Aorta (tissue), 5 donors: ENCODE measurements at regions of chr2 and their contacts with region 1.

Region 1: DNA sequence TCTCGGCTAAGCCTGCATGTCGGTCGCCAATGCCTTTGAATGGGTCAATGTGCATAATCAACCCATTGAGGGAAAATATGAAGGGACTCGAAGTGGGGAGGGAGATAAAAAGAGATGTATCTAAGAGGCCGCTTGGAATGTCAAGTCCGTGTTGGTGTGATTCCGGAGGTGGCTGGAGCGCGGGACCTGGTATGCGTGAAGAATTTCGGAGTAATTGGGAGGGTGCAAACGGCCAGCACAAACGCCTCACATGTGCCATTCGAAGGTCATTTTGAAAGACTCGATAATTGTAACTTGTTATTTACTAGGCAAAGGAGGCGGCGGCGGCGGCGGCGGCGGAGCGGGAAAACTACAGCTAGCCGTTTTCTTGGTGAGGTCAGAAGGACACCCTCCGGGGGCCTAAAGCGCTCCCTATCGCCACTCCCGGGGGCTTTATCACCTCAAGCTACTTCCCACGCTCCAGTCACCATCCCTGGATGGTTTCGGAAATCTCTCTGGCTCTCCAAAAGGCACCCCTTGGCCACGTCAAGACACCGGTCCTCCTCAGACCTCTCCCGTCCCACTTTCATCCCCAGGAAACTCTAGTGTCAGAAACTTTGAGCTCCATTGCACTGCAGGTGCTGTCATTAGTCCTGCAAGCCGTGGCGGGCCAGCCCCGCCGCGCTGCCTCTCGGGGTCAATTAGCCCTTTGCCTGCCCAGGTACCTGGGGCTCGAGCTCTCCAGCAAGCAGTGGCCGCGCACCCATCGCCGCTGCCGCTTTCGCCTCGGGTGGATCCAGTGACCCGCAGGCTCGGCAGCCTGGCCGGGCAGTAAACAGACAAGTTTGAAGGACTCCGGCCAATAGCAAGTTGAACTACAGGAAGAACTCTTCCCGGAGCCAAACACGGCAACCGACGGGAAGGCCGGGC is 1.5 kb downstream of the ERBB4 start:
- DNase-seq: peak in 1 of 2 donors; percentile 76
- ATAC-seq: peak; percentile 28
- H3K4me3 ChIP-seq: peak overlapping the region; percentile 72 to 98
- H3K27ac ChIP-seq: peak overlapping the region; percentile 18 to 44
- H3K4me1 ChIP-seq: no peaks in the 10 kb centered on the region
- H3K27me3 ChIP-seq: no peaks in the 10 kb centered on the region

Region 2: DNA sequence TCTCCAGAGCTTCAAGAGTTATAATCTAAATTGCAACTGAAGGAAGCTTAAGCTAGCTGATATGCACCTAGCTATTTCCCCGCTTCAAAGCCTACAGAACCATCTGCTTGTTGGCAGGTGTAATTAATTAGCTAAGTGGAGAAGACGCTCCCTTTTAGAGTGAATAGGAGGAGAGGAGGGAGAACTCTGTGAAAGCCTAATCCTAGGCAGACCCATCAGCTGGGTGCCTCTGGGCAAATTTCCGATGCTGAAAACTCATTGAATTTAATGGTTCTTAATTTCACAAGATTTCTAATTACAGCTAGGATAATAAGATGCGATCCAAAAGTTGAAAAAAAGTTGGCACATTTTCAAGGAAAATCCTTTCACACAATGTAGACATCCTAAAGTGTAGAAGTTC is 734.4 kb before region 1 on chr2:
- intact Hi-C with region 1: no loop called
- DNase-seq: no peak
- ATAC-seq: no peak
- H3K4me3 ChIP-seq: no peak overlapping the region
- H3K27ac ChIP-seq: no peak overlapping the region
- H3K4me1 ChIP-seq: no peaks in the 10 kb centered on the region
- H3K27me3 ChIP-seq: no peaks in the 10 kb centered on the region

Region 3: DNA sequence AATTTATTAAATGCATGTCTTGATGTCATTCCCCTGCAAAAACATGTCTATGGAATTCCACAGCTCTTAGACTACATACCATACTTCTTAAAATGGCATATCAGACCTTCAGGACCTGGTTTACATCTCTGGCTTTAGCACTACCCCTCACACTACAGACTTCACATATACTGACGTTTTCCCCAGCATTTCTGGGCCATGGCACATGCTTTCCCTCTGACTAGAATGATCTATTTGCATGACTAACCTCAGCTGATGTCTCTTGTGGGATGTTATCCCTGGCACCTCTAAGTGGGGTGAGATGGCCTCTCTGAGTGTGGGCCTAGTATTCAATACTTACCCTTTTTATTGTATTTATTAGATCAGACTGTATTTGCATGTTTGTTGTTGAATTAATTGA is 380.1 kb before region 1 on chr2:
- intact Hi-C with region 1: loop called (anchors 5 to 10 kb)
- DNase-seq: no peak
- ATAC-seq: no peak
- H3K4me3 ChIP-seq: no peak overlapping the region
- H3K27ac ChIP-seq: no peak overlapping the region
- H3K4me1 ChIP-seq: peaks cover 0 to 4% of the 10 kb centered on the region in 2 donors
- H3K27me3 ChIP-seq: no peaks in the 10 kb centered on the region

Region 4: DNA sequence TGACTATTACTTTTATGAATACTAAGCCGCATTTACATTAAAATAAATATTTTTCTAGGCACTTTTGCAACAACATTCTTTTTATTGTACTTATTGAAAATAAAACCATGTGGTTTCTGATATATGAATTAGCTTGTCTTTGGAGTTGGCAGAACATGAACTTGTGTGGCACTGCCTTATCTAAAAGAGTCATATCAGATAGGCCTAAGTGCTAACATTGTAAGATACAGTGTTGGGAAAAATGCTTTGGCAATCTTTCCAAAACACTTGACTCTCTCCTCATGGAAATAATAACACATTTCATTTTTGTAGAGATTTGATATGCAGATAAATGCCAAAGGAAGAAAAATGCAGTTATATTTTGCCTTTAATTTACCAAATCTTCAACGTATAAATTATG is 190.2 kb before region 1 on chr2:
- intact Hi-C with region 1: loop called (anchors 10 kb)
- DNase-seq: no peak
- ATAC-seq: no peak
- H3K4me3 ChIP-seq: no peak overlapping the region
- H3K27ac ChIP-seq: no peak overlapping the region
- H3K4me1 ChIP-seq: peaks cover 1 to 5% of the 10 kb centered on the region in 2 donors
- H3K27me3 ChIP-seq: no peaks in the 10 kb centered on the region

Region 5: GRCh38 chr2:212381428-212382102 is 155.5 kb before region 1 on chr2:
- intact Hi-C with region 1: loop called in 1 of 2 experiments (anchors 10 kb)
- DNase-seq: no peak
- ATAC-seq: no peak
- H3K4me3 ChIP-seq: no peak overlapping the region
- H3K27ac ChIP-seq: no peak overlapping the region
- H3K4me1 ChIP-seq: peaks cover 0 to 2% of the 10 kb centered on the region in 2 donors
- H3K27me3 ChIP-seq: no peaks in the 10 kb centered on the region

Region 6: GRCh38 chr2:212548450-212548819 is 11.4 kb after region 1 on chr2:
- intact Hi-C with region 1: no loop called
- DNase-seq: no peak
- ATAC-seq: peak; percentile 68
- H3K4me3 ChIP-seq: no peak overlapping the region
- H3K27ac ChIP-seq: no peak overlapping the region
- H3K4me1 ChIP-seq: peaks cover 2 to 3% of the 10 kb centered on the region in 2 donors
- H3K27me3 ChIP-seq: no peaks in the 10 kb centered on the region

Region 7: GRCh38 chr2:212618641-212619040 is 81.6 kb after region 1 on chr2:
- intact Hi-C with region 1: no loop called
- DNase-seq: no peak
- ATAC-seq: no peak
- H3K4me3 ChIP-seq: no peak overlapping the region
- H3K27ac ChIP-seq: no peak overlapping the region
- H3K4me1 ChIP-seq: no peaks in the 10 kb centered on the region
- H3K27me3 ChIP-seq: no peaks in the 10 kb centered on the region